Sigmoid colon (tissue), 7 donors: ENCODE measurements at regions of chr11 and their contacts with region 1.

Region 1: DNA sequence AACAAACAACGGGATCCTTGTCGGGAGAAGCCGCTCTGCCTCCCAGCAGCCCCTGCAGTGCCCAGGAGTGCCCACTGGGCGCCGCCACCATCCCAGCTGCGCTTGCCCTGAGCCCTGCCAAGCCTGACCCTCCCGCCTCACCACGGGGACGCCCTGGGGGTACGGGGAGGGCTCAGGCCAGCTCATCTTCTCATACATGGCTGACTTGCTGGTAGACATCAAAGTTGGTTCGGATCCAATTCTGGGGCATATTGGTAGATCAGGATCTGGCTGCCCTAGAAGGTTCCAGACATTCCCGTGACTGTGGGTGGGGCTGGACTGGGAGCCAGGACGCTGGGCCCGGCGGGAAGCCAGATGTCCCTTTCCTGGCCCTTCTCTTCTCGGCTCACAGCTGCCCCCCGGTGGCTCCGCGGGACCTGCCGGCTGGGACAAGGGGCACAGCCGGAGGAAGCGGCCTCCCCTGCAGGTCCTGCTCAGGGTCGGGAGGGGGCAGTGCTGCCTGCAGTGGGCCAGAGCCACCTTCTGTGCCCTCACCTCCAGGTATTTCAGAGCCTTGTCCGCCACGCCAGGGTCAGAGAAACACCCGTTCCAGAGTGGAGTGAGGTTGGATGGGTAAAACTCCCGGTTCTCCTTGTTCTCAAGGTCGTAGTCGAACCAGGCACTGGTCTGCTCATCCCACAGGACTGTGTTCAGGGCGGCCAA is 10.6 kb upstream of the TREH start:
- DNase-seq: peak; percentile 90
- H3K4me3 ChIP-seq: peak overlapping the region; percentile 13 to 50 (median 46)
- H3K27ac ChIP-seq: peak overlapping the region; percentile 73 to 82 (median 76)
- H3K4me1 ChIP-seq: peaks cover 0 to 19% (median 17%) of the 10 kb centered on the region in 4 donors
- H3K27me3 ChIP-seq: no peaks in the 10 kb centered on the region
- CTCF ChIP-seq: peak; percentile 79 to 95 (median 82)
- EP300 ChIP-seq: peak in 1 of 4 donors; percentile 41
- POLR2A ChIP-seq: no peak

Region 2: DNA sequence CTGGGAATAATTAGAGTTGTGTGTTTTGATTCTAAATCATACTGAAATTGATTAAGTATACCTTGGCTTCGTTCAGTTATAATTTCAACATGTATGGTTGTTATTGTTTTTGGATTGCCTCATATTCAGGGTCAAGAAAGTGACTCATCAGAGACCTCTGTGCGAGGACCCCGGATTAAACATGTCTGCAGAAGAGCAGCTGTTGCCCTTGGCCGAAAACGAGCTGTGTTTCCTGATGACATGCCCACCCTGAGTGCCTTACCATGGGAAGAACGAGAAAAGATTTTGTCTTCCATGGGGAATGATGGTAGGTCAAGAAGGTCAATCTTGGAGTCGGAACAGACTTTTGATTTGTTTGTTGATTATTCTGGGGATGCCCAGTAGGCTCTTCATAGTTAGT is 213.3 kb before region 1 on chr11:
- intact Hi-C with region 1: no loop called
- DNase-seq: no peak
- H3K4me3 ChIP-seq: no peak overlapping the region
- H3K27ac ChIP-seq: no peak overlapping the region
- H3K4me1 ChIP-seq: no peaks in the 10 kb centered on the region
- H3K27me3 ChIP-seq: no peaks in the 10 kb centered on the region
- CTCF ChIP-seq: no peak
- EP300 ChIP-seq: no peak
- POLR2A ChIP-seq: no peak

Region 3: DNA sequence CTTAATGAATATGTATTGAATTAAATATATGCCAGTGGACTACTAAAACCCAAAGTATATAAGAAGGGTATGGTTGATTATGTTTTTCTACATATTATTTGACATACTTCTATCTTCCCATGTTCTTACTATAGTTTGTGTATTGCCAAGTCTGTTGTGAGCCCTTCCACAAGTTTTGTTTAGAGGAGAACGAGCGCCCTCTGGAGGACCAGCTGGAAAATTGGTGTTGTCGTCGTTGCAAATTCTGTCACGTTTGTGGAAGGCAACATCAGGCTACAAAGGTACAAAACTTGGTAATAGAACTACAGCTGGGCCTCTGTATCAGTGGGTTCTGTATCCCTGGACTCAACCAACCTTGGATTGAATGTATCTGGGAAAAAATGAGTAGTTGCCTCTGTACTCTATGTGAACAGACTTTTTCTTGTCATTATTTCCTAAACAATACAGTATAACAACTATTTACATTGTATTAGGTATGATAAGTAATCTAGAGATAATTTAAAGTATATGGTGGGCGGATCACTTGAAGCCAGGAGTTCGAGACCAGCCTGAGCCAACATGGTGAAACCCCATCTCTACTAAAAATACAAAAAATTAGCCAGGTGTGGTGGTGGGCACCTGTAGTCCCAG is 201.4 kb before region 1 on chr11:
- intact Hi-C with region 1: no loop called
- DNase-seq: peak; percentile 74
- H3K4me3 ChIP-seq: no peak overlapping the region
- H3K27ac ChIP-seq: no peak overlapping the region
- H3K4me1 ChIP-seq: no peaks in the 10 kb centered on the region
- H3K27me3 ChIP-seq: no peaks in the 10 kb centered on the region
- CTCF ChIP-seq: peak; percentile 62 to 75 (median 72)
- EP300 ChIP-seq: no peak
- POLR2A ChIP-seq: no peak

Region 4: DNA sequence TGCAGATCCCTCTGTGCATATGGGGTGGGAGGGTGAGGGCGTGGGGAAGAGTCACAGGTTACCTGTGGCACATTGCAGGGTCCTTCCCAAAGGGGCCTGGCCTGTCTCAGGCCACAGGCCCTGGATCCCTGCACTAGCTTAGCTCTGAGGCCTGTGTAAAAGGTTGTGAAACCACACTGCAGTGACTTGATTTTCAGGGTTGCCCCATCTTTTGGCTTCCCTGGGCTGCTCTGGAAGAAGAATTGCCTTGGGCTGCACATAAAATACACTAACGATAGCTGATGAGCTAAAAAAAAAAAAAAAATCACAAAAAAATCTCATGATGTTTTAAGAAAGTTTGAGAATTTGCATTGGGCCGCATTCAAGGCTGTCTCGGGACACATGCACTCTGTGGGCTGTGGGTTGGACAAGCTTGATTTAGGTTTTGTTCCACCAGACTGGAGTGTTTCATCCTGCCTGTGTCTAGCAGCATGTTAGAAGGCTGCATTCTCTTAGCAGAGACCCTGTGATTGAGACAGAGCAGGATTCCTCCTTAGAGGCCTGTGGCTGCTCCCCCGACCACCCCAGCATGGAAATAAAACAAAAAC is 25.3 kb after region 1 on chr11:
- intact Hi-C with region 1: no loop called
- DNase-seq: no peak
- H3K4me3 ChIP-seq: no peak overlapping the region
- H3K27ac ChIP-seq: peak overlapping the region in 2 of 4 donors; percentile 16 to 32
- H3K4me1 ChIP-seq: no peaks in the 10 kb centered on the region
- H3K27me3 ChIP-seq: no peaks in the 10 kb centered on the region
- CTCF ChIP-seq: no peak
- EP300 ChIP-seq: no peak
- POLR2A ChIP-seq: no peak

Region 5: GRCh38 chr11:118907051-118908042 is 217.3 kb after region 1 on chr11:
- intact Hi-C with region 1: loop called (anchors 2 kb)
- DNase-seq: peak; percentile 92
- H3K4me3 ChIP-seq: no peak overlapping the region
- H3K27ac ChIP-seq: peak overlapping the region; percentile 95 to 100 (median 100)
- H3K4me1 ChIP-seq: peaks cover 0 to 68% (median 62%) of the 10 kb centered on the region in 4 donors
- H3K27me3 ChIP-seq: no peaks in the 10 kb centered on the region
- CTCF ChIP-seq: peak; percentile 94 to 99 (median 98)
- EP300 ChIP-seq: no peak
- POLR2A ChIP-seq: no peak